ENCODE measurements at regions of chr1 and their contacts with region 1.

Region 1: DNA sequence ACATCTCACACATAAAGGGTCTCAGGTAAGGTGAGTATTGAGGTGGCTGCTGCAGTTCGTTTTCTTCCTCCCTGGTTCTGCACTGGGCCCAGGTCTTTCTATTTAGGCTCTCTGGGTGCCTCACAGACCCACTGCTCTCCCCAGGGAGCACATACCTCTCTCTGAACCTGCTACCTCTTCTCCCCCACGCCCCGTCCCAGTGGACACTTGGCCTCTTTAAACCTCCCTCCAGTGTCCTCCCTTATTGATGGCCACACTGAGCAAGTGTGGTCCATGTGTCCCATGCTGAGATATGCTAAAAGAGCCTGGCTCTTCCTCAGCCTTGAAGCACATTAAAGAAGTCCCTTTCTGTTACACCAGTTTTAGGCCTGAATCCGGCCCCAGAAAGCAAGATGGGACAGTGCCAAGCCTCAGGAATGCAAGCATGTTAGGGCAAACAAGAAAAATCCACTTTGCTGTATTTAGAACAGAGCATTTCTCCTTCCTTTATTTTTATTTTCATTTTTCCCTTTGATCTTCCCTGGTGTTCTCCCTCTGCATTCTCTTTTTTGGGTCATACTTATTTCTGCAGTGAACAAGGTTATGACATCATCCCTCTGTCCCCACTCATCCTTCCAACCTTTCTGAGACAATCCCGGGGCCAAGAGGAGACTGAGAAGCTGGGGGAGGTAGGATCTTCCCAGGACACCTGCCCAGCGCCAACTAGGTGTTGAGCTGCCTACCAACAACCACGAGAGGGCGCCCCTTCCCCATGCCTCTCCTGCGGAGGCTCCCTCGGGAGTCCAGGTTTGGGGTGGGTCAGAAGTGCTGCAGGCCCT is 5.0 kb upstream of the CHI3L2 start:
- DNase-seq: peak; percentile 83
- ATAC-seq: peak; percentile 48
- H3K4me3 ChIP-seq: peak overlapping the region in 3 of 5 experiments; percentile 3 to 26 (median 5)
- H3K4me3 Mint-ChIP-seq: peak overlapping the region; percentile 72
- H3K27ac ChIP-seq: peak overlapping the region; percentile 46 to 92
- H3K27ac Mint-ChIP-seq: peak overlapping the region; percentile 91
- H3K4me1 ChIP-seq: peaks cover 85 to 87% of the 10 kb centered on the region in 2 donors
- H3K4me1 Mint-ChIP-seq: peaks cover 82% of the 10 kb centered on the region
- H3K27me3 ChIP-seq: no peaks in the 10 kb centered on the region
- H3K27me3 Mint-ChIP-seq: no peaks in the 10 kb centered on the region
- CTCF ChIP-seq: peak; percentile 89

Region 2: GRCh38 chr1:110872745-110873720 is 349.5 kb before region 1 on chr1 and contains the start of gene CD53:
- CTCF ChIA-PET with region 1: no interaction called
- POLR2A ChIA-PET with region 1: no interaction called
- intact Hi-C with region 1: loop called (anchors 5 kb)
- DNase-seq: peak; percentile 92
- ATAC-seq: peak; percentile 66
- H3K4me3 ChIP-seq: peak within 1 kb of the TSS; percentile 73 to 100 (median 97)
- H3K4me3 Mint-ChIP-seq: peak within 1 kb of the TSS; percentile 99
- H3K27ac ChIP-seq: peak within 1 kb of the TSS; percentile 96 to 99
- H3K27ac Mint-ChIP-seq: peak within 1 kb of the TSS; percentile 99
- H3K4me1 ChIP-seq: peaks cover 60% of the 10 kb centered on the region in 2 donors
- H3K4me1 Mint-ChIP-seq: peaks cover 70% of the 10 kb centered on the region
- H3K27me3 ChIP-seq: no peaks in the 10 kb centered on the region
- H3K27me3 Mint-ChIP-seq: no peaks in the 10 kb centered on the region
- CTCF ChIP-seq: no peak
- total RNA-seq, gene CD53: 490 and 495 TPM in 2 replicates

Region 3: DNA sequence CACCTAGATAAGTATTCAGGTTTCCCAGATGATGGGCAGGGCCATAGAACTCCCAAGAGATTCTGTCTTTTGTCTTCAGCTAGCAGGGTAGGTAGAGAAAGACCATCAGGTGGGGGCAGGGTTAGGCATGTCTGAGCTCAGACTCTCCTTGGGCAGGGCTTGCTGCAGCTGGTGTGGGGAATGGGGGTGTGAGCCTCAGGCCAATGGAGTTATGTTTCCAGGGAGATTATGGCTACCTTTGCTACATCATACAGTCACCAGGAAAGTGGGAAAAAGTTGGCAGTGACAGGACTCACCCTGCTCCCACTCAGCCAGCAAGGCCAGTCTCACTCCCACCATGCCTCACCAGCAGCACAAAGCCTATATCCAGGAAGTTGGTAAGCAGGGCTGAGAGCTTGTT is 160.4 kb before region 1 on chr1:
- CTCF ChIA-PET with region 1: no interaction called
- POLR2A ChIA-PET with region 1: no interaction called
- intact Hi-C with region 1: no loop called
- DNase-seq: no peak
- ATAC-seq: no peak
- H3K4me3 ChIP-seq: no peak overlapping the region
- H3K4me3 Mint-ChIP-seq: no peak overlapping the region
- H3K27ac ChIP-seq: no peak overlapping the region
- H3K27ac Mint-ChIP-seq: no peak overlapping the region
- H3K4me1 ChIP-seq: no peaks in the 10 kb centered on the region
- H3K4me1 Mint-ChIP-seq: peaks cover 7% of the 10 kb centered on the region
- H3K27me3 ChIP-seq: no peaks in the 10 kb centered on the region
- H3K27me3 Mint-ChIP-seq: no peaks in the 10 kb centered on the region
- CTCF ChIP-seq: no peak

Region 4: DNA sequence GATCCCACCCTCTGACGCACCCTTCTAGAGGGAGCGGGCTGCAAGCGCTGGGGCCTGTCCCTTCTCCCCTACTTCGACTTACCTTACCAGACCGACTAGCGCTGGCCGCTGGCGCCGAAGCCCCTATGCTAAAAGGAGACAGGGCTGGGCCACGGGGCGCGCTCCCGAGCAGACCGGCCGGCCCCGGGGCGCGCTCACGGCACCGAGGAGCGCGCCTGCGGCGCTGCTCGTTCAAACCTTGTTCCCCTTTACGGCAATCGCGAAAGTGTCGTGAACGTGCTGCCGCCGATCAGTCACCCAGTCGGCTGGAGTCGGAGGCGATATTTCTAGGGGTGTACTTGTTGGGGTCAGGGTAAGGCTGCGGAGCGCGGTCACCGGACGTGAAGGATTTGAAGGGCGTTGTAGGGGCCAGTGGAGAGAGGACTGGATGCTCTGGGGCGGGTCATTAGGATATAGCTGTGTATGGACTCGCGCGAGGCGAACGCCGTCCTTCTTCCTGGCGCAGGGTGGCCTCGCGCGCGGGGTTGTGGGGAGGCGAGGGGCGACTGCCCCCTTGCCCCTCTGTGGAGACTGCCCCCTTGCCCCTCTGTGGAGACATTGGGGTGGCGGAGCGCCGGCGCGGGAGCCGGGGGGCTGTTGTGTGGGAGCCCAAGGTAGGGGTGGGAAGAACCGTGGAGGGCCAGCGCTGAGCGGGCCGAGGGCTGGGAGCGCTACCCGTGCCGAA is 82.4 kb before region 1 on chr1 and contains the starts of genes CEPT1 and DRAM2:
- CTCF ChIA-PET with region 1: interaction called, 11 read pairs
- POLR2A ChIA-PET with region 1: interaction called, 3 read pairs
- intact Hi-C with region 1: loop called (anchors 2 kb)
- DNase-seq: peak; percentile 96
- ATAC-seq: peak; percentile 80
- H3K4me3 ChIP-seq: peak within 1 kb of the TSS; percentile 89 to 96 (median 93)
- H3K4me3 Mint-ChIP-seq: peak within 1 kb of the TSS; percentile 100
- H3K27ac ChIP-seq: peak within 1 kb of the TSS; percentile 84 to 93
- H3K27ac Mint-ChIP-seq: peak within 1 kb of the TSS; percentile 99
- H3K4me1 ChIP-seq: peaks cover 55 to 62% of the 10 kb centered on the region in 2 donors
- H3K4me1 Mint-ChIP-seq: peaks cover 62% of the 10 kb centered on the region
- H3K27me3 ChIP-seq: no peaks in the 10 kb centered on the region
- H3K27me3 Mint-ChIP-seq: no peaks in the 10 kb centered on the region
- CTCF ChIP-seq: no peak
- total RNA-seq, gene CEPT1: 83.5 and 86.5 TPM in 2 replicates
- total RNA-seq, gene DRAM2: 102 and 108 TPM in 2 replicates

Region 5: DNA sequence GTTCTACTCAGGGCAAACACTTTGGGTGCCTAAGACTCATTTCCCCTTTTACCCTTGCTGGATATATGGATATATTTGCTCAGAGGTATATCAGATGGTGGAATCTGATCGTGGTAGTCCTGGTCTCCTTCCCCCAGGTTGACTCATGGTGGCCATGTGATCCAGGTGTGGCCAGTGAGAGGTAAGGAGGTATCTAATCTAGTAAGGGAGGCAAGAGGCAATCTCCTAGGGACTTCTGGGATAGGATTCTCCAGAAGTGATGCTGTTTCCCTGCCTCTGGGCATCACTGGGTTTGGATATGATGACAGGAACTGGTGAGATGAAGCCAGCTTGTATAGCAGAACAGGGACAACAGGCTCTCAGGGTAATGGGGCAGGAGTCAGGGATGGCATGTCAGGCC is 13.6 kb before region 1 on chr1:
- CTCF ChIA-PET with region 1: interaction called, 205 read pairs
- POLR2A ChIA-PET with region 1: interaction called, 138 read pairs
- intact Hi-C with region 1: loop called (anchors 1 kb)
- DNase-seq: no peak
- ATAC-seq: no peak
- H3K4me3 ChIP-seq: no peak overlapping the region
- H3K4me3 Mint-ChIP-seq: no peak overlapping the region
- H3K27ac ChIP-seq: no peak overlapping the region
- H3K27ac Mint-ChIP-seq: peak overlapping the region; percentile 7
- H3K4me1 ChIP-seq: peaks cover 33 to 49% of the 10 kb centered on the region in 2 donors
- H3K4me1 Mint-ChIP-seq: peaks cover 60% of the 10 kb centered on the region
- H3K27me3 ChIP-seq: no peaks in the 10 kb centered on the region
- H3K27me3 Mint-ChIP-seq: no peaks in the 10 kb centered on the region
- CTCF ChIP-seq: no peak

Region 6: GRCh38 chr1:111346089-111346885 is 123.8 kb after region 1 on chr1:
- CTCF ChIA-PET with region 1: interaction called, 10 read pairs
- POLR2A ChIA-PET with region 1: no interaction called
- intact Hi-C with region 1: no loop called
- DNase-seq: peak; percentile 98
- ATAC-seq: peak; percentile 85
- H3K4me3 ChIP-seq: peak overlapping the region; percentile 9 to 75 (median 66)
- H3K4me3 Mint-ChIP-seq: peak overlapping the region; percentile 97
- H3K27ac ChIP-seq: peak overlapping the region; percentile 71 to 78
- H3K27ac Mint-ChIP-seq: peak overlapping the region; percentile 95
- H3K4me1 ChIP-seq: peaks cover 9 to 16% of the 10 kb centered on the region in 2 donors
- H3K4me1 Mint-ChIP-seq: peaks cover 16% of the 10 kb centered on the region
- H3K27me3 ChIP-seq: no peaks in the 10 kb centered on the region
- H3K27me3 Mint-ChIP-seq: no peaks in the 10 kb centered on the region
- CTCF ChIP-seq: no peak

Region 7: GRCh38 chr1:111592389-111593361 is 370.2 kb after region 1 on chr1:
- CTCF ChIA-PET with region 1: no interaction called
- POLR2A ChIA-PET with region 1: no interaction called
- intact Hi-C with region 1: loop called (anchors 10 kb)
- DNase-seq: peak; percentile 76
- ATAC-seq: peak; percentile 95
- H3K4me3 ChIP-seq: peak overlapping the region in 2 of 5 experiments; percentile 8 to 44
- H3K4me3 Mint-ChIP-seq: peak overlapping the region; percentile 66
- H3K27ac ChIP-seq: peak overlapping the region; percentile 63 to 70
- H3K27ac Mint-ChIP-seq: peak overlapping the region; percentile 83
- H3K4me1 ChIP-seq: peaks cover 60 to 63% of the 10 kb centered on the region in 2 donors
- H3K4me1 Mint-ChIP-seq: peaks cover 51% of the 10 kb centered on the region
- H3K27me3 ChIP-seq: no peaks in the 10 kb centered on the region
- H3K27me3 Mint-ChIP-seq: no peaks in the 10 kb centered on the region
- CTCF ChIP-seq: no peak